Activated B cell treated with CpG ODN at 0.5 μM for 24 hours (primary cell): ENCODE measurements at regions of chr7 and their contacts with region 1.

Region 1: GRCh38 chr7:25069900-25070443 is 55.1 kb downstream of the CYCS start:
- DNase-seq: no peak
- ATAC-seq: peak; percentile 49
- H3K4me3 Mint-ChIP-seq: no peak overlapping the region
- H3K27ac Mint-ChIP-seq: no peak overlapping the region
- H3K4me1 Mint-ChIP-seq: peaks cover 7% of the 10 kb centered on the region
- H3K27me3 Mint-ChIP-seq: no peaks in the 10 kb centered on the region
- CTCF ChIP-seq: peak; percentile 55

Region 2: DNA sequence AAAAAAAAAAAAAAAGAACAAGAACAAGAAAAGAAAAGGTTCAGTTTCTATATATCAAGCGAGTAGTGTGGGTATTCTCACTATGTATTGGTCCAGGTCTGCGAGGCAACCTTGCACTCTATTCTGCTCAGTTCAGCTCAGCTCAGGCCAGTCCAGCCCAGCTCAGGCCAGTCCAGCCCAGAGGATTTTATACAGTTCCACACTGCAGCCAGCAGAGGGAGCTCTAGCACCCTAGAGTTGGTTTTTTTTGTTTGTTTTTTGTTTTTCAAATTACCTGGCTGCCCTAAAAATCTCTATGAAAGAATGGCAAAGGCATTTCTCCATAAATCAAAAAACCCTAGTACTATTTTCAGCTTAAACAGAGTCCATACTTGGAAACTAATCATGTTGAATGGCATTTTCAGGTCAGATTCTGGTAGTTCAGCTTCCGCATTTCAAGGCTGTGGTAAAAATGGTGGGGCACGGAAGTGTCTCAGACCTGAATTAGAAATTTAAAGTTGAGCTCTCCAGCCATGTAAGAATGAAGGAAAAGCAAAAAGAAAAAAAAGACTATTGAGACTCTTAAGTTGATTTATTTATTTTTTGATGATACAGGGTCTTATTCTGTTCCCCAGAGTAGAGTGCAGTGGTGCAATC is 257.5 kb before region 1 on chr7:
- CTCF ChIA-PET with region 1: interaction called, 93 read pairs
- POLR2A ChIA-PET with region 1: interaction called, 5 read pairs
- intact Hi-C with region 1: loop called (anchors 1 kb)
- DNase-seq: no peak
- ATAC-seq: peak; percentile 61
- H3K4me3 Mint-ChIP-seq: no peak overlapping the region
- H3K27ac Mint-ChIP-seq: no peak overlapping the region
- H3K4me1 Mint-ChIP-seq: no peaks in the 10 kb centered on the region
- H3K27me3 Mint-ChIP-seq: no peaks in the 10 kb centered on the region
- CTCF ChIP-seq: peak; percentile 85

Region 3: GRCh38 chr7:24825931-24826661 is 243.9 kb before region 1 on chr7:
- CTCF ChIA-PET with region 1: interaction called, 60 read pairs
- POLR2A ChIA-PET with region 1: interaction called, 13 read pairs
- intact Hi-C with region 1: no loop called
- DNase-seq: no peak
- ATAC-seq: no peak
- H3K4me3 Mint-ChIP-seq: no peak overlapping the region
- H3K27ac Mint-ChIP-seq: peak overlapping the region; percentile 31
- H3K4me1 Mint-ChIP-seq: peaks cover 61% of the 10 kb centered on the region
- H3K27me3 Mint-ChIP-seq: no peaks in the 10 kb centered on the region
- CTCF ChIP-seq: no peak

Region 4: DNA sequence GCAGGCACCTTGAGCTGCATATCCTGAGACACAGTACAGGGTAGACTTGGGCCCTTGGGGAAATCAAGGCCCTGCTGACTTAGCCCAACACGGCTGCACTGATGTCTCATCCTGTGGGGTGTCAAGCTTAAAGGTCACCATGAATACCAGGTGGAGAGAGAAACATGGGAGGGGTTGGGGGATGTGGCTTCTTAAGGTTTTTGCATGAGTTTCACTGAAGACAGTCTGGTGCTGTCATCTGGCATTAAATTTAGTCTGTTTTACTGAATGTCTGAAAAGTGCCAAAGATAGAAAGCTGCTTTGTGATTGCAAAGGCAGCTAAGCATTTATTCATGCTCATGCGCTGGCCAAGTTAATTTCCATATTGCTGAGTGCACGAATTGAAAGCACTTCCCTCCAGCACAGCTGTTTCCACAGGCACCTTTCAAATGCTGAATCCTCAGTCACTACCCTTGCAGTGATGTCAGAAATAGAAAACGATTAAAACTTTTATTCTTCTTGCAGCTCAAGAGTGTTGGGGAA is 192.1 kb before region 1 on chr7:
- CTCF ChIA-PET with region 1: no interaction called
- POLR2A ChIA-PET with region 1: no interaction called
- intact Hi-C with region 1: loop called (anchors 5 kb)
- DNase-seq: no peak
- ATAC-seq: peak; percentile 90
- H3K4me3 Mint-ChIP-seq: peak overlapping the region; percentile 64
- H3K27ac Mint-ChIP-seq: peak overlapping the region; percentile 83
- H3K4me1 Mint-ChIP-seq: peaks cover 34% of the 10 kb centered on the region
- H3K27me3 Mint-ChIP-seq: no peaks in the 10 kb centered on the region
- CTCF ChIP-seq: no peak

Region 5: GRCh38 chr7:25054819-25055519 is 15.0 kb before region 1 on chr7:
- CTCF ChIA-PET with region 1: no interaction called
- POLR2A ChIA-PET with region 1: no interaction called
- intact Hi-C with region 1: no loop called
- DNase-seq: no peak
- ATAC-seq: no peak
- H3K4me3 Mint-ChIP-seq: no peak overlapping the region
- H3K27ac Mint-ChIP-seq: no peak overlapping the region
- H3K4me1 Mint-ChIP-seq: no peaks in the 10 kb centered on the region
- H3K27me3 Mint-ChIP-seq: peaks cover 11% of the 10 kb centered on the region
- CTCF ChIP-seq: no peak

Region 6: GRCh38 chr7:25288556-25289307 is 218.8 kb after region 1 on chr7:
- CTCF ChIA-PET with region 1: no interaction called
- POLR2A ChIA-PET with region 1: no interaction called
- intact Hi-C with region 1: no loop called
- DNase-seq: no peak
- ATAC-seq: no peak
- H3K4me3 Mint-ChIP-seq: no peak overlapping the region
- H3K27ac Mint-ChIP-seq: no peak overlapping the region
- H3K4me1 Mint-ChIP-seq: no peaks in the 10 kb centered on the region
- H3K27me3 Mint-ChIP-seq: peaks cover 7% of the 10 kb centered on the region
- CTCF ChIP-seq: no peak